ENCODE measurements at regions of chr15 and their contacts with region 1.

Region 1: DNA sequence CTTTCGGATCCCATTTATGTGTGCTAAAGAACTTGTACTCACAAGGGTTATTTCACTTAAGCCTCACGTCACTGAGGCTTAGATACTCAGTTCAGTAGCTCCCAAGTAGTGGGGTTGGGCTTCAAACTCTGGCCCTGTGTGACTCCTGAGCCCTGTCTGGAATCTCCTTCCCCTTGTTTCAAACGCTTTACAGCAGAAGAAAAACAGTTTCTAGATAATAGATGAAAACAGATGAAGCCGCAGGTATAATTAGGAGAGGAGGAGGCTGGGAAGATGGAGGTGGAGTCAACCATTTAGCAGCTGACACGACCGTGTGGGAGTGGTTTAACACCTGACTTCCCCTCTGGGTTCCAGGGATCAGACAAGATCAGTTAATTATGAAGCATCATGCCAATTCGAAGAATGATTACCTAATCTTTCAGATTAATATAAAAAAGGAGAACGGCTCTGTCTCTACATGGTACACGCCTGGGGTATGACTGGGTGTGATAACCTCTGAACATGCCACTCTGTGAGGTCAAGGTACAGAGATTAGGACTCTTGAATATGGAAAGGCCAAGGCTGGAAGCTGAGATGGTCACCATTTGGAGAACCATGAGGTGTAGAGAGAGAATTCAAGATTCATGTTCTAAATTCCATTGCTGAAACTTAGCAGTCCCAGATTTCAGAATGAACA is 31.1 kb downstream of the TPM1 start:
- DNase-seq: peak in 2 of 4 experiments; percentile 36 to 42
- ATAC-seq: peak; percentile 68
- H3K4me3 ChIP-seq: no peak overlapping the region
- H3K27ac ChIP-seq: no peak overlapping the region
- H3K4me1 ChIP-seq: peaks cover 5 to 30% of the 10 kb centered on the region in 2 experiments; a peak in 3 of 5 replicates
- H3K27me3 ChIP-seq: no peaks in the 10 kb centered on the region
- CTCF ChIP-seq: no peak
- EP300 ChIP-seq: no peak; the same call in 1 of the 2 replicates
- POLR2A ChIP-seq: no peak
- RAD21 ChIP-seq: no peak

Region 2: GRCh38 chr15:63063164-63063756 is 10.4 kb before region 1 on chr15:
- CTCF ChIA-PET with region 1: no interaction called
- POLR2A ChIA-PET with region 1: interaction called, 13 read pairs
- in situ Hi-C with region 1: no loop called
- intact Hi-C with region 1: no loop called
- DNase-seq: peak in 3 of 4 experiments; percentile 25 to 73 (median 68)
- ATAC-seq: peak; percentile 92
- H3K4me3 ChIP-seq: no peak overlapping the region
- H3K27ac ChIP-seq: peak overlapping the region; percentile 8; the same call in 2 of the 3 replicates
- H3K4me1 ChIP-seq: peaks cover 8 to 24% of the 10 kb centered on the region in 2 experiments; a peak in 3 of 5 replicates
- H3K27me3 ChIP-seq: no peaks in the 10 kb centered on the region
- CTCF ChIP-seq: no peak
- EP300 ChIP-seq: no peak
- POLR2A ChIP-seq: no peak
- RAD21 ChIP-seq: no peak